ENCODE measurements at regions of chr3 and their contacts with region 1.

Region 1: GRCh38 chr3:4350789-4351163 is 47.6 kb downstream of the SETMAR start:
- DNase-seq: peak; percentile 75
- ATAC-seq: peak; percentile 92
- H3K4me3 Mint-ChIP-seq: peak overlapping the region; percentile 23
- H3K27ac Mint-ChIP-seq: peak overlapping the region; percentile 4
- H3K4me1 Mint-ChIP-seq: peaks cover 26% of the 10 kb centered on the region
- H3K27me3 Mint-ChIP-seq: no peaks in the 10 kb centered on the region

Region 2: DNA sequence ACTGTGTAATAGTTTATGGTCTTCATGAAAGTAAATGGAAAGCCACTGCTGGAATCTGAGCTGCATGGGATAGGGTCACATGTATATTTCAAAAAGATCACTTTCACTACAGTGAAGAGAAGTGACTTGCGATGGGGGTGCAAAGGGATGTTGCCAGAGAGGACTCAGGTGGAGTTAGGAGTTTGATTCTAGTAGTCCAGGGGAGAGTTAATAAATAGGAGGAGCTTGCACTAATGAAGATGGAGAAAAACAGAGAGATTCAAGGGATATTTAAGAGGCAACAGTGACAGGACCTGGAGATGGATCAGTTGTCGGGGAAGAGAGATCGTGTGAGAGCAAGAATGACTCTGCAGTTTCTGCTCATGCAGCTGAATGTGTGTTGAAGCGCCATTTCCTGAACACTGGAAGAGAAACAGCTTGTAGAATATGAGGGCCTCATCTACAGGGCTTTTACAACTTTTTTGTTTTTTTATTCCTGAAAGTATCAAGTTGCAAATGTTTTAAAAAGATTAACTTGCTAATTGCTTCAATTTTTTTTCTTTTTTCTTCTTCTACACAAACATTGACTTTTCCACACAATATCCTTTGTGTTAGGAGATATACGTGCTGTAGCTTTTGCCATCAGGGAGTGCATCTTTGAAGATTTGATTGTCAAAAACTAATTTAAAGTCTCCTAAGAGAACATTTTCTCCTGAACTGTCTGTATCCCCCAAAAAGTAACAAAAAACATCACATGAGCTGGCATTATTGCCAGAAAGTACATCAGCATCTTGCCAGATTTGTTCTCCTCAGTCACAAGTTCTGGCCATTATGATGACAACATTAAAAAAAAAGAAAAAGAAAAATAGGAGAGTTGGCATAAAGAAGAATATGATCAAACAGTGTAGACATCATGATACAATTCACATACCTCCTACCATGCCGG is 10.1 kb before region 1 on chr3:
- CTCF ChIA-PET with region 1: interaction called, 16 read pairs
- POLR2A ChIA-PET with region 1: no interaction called
- DNase-seq: no peak
- ATAC-seq: no peak
- H3K4me3 Mint-ChIP-seq: no peak overlapping the region
- H3K27ac Mint-ChIP-seq: no peak overlapping the region
- H3K4me1 Mint-ChIP-seq: peaks cover 8% of the 10 kb centered on the region
- H3K27me3 Mint-ChIP-seq: no peaks in the 10 kb centered on the region

Region 3: GRCh38 chr3:4466741-4467521 is 116.2 kb after region 1 on chr3 and contains the start of gene SUMF1:
- CTCF ChIA-PET with region 1: interaction called, 13 read pairs
- POLR2A ChIA-PET with region 1: interaction called, 4 read pairs
- DNase-seq: peak; percentile 86
- ATAC-seq: peak; percentile 98
- H3K4me3 Mint-ChIP-seq: peak within 1 kb of the TSS; percentile 87
- H3K27ac Mint-ChIP-seq: peak within 1 kb of the TSS; percentile 92
- H3K4me1 Mint-ChIP-seq: peaks cover 17% of the 10 kb centered on the region
- H3K27me3 Mint-ChIP-seq: no peaks in the 10 kb centered on the region
- total RNA-seq, gene SUMF1: 7.4 to 8.7 TPM

Region 4: GRCh38 chr3:4493014-4493940 is 142.5 kb after region 1 on chr3 and contains the start of gene ITPR1:
- CTCF ChIA-PET with region 1: interaction called, 25 read pairs
- POLR2A ChIA-PET with region 1: interaction called, 21 read pairs
- DNase-seq: peak; percentile 99
- ATAC-seq: peak; percentile 91
- H3K4me3 Mint-ChIP-seq: peak within 1 kb of the TSS; percentile 94
- H3K27ac Mint-ChIP-seq: peak within 1 kb of the TSS; percentile 89
- H3K4me1 Mint-ChIP-seq: peaks cover 39% of the 10 kb centered on the region
- H3K27me3 Mint-ChIP-seq: peaks cover 20% of the 10 kb centered on the region
- total RNA-seq, gene ITPR1: 53.8 to 57.3 TPM

Region 5: GRCh38 chr3:4584456-4585249 is 233.9 kb after region 1 on chr3:
- CTCF ChIA-PET with region 1: interaction called, 15 read pairs
- POLR2A ChIA-PET with region 1: no interaction called
- DNase-seq: peak; percentile 40
- ATAC-seq: peak; percentile 59
- H3K4me3 Mint-ChIP-seq: peak overlapping the region; percentile 77
- H3K27ac Mint-ChIP-seq: peak overlapping the region; percentile 79
- H3K4me1 Mint-ChIP-seq: peaks cover 50% of the 10 kb centered on the region
- H3K27me3 Mint-ChIP-seq: no peaks in the 10 kb centered on the region

Region 6: GRCh38 chr3:5136211-5136918 is 785.6 kb after region 1 on chr3:
- CTCF ChIA-PET with region 1: no interaction called
- POLR2A ChIA-PET with region 1: no interaction called
- DNase-seq: peak; percentile 57
- ATAC-seq: peak; percentile 95
- H3K4me3 Mint-ChIP-seq: no peak overlapping the region
- H3K27ac Mint-ChIP-seq: peak overlapping the region; percentile 58
- H3K4me1 Mint-ChIP-seq: peaks cover 41% of the 10 kb centered on the region
- H3K27me3 Mint-ChIP-seq: no peaks in the 10 kb centered on the region

Measured in activated CD8-positive, alpha-beta T cell treated with anti-CD3 and anti-CD28 coated beads, Interleukin-2, amount 10 ng/mL, durations not matched to agents 7 days and 5 days (primary cell).